Mammary epithelial cell (primary cell): ENCODE measurements at regions of chr1 and their contacts with region 1.

Region 1: GRCh38 chr1:172761581-172762025 is 102.7 kb downstream of the FASLG start:
- DNase-seq: peak; percentile 70
- H3K4me3 ChIP-seq: no peak overlapping the region
- H3K27ac ChIP-seq: no peak overlapping the region
- H3K4me1 ChIP-seq: peaks cover 17% of the 10 kb centered on the region
- H3K27me3 ChIP-seq: no peaks in the 10 kb centered on the region
- CTCF ChIP-seq: no peak

Region 2: DNA sequence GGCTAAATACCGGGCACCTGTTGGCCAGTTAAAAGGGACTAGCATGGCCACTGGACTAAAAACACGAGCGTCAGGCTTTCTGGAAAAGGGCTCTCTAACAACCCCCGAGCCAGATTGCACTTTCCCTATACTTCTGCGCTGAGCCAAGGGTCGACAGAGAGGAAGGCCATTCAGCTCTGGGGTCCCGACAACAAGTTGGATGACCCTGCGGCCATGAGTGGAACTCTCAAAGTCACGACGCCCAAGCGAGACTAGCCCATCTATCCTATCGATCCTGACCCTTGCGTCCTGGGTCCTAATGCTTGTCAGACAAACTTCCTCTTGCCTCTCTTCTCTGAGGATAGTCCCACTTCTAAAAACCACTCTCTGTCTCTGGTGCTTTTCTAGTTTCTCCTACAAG is 615.7 kb after region 1 on chr1:
- CTCF ChIA-PET with region 1: no interaction called
- dilution Hi-C with region 1: no loop called
- in situ Hi-C with region 1: no loop called
- intact Hi-C with region 1: no loop called
- DNase-seq: no peak
- H3K4me3 ChIP-seq: no peak overlapping the region
- H3K27ac ChIP-seq: no peak overlapping the region
- H3K4me1 ChIP-seq: no peaks in the 10 kb centered on the region
- H3K27me3 ChIP-seq: no peaks in the 10 kb centered on the region
- CTCF ChIP-seq: no peak

Region 3: DNA sequence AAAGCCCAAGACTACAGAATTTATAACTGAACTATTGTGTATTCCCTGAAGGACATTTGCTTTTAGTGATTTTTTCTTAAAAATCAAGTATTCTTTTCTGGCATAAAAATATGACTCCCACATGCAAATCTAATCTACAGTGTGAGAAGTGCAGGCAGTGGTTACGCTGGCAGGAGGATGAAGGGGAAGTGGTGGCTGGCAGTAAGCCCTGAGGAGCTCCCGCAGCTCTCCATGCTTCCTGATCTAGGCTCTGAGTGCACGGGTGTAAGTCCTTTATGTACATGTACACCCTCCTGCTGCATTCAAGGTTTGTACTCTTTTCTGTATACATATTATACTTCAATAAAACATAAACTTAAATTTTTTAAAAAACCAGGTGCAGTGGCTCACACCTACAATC is 648.0 kb after region 1 on chr1:
- CTCF ChIA-PET with region 1: no interaction called
- dilution Hi-C with region 1: loop called (anchors 25 kb)
- in situ Hi-C with region 1: no loop called
- intact Hi-C with region 1: loop called (anchors 5 kb)
- DNase-seq: peak; percentile 37
- H3K4me3 ChIP-seq: no peak overlapping the region
- H3K27ac ChIP-seq: no peak overlapping the region
- H3K4me1 ChIP-seq: peaks cover 20% of the 10 kb centered on the region
- H3K27me3 ChIP-seq: no peaks in the 10 kb centered on the region
- CTCF ChIP-seq: no peak

Region 4: DNA sequence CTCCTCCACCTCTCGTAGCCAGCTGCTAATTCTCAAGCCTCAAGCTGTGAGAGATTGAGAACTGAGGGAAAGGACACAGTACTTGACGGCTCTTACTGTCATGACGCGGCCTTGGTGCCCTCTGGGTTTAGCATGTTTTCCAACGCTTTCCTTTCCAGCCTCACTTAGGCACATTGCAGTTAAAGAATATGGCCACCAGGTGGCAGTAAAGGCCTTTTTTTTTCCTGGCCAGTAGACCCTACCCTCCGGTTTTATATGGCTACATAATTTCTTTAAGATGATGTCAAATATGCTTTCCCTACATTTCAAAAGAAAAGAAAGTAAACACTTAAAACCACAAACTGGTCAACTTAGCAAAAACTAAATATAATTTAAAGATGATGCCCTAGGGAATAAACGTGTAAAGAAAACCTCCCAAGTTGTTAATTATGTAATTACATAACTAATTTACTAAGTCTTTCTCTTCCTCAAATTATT is 658.8 kb after region 1 on chr1:
- CTCF ChIA-PET with region 1: no interaction called
- dilution Hi-C with region 1: loop called (anchors 25 kb)
- in situ Hi-C with region 1: no loop called
- intact Hi-C with region 1: no loop called
- DNase-seq: peak; percentile 68
- H3K4me3 ChIP-seq: no peak overlapping the region
- H3K27ac ChIP-seq: no peak overlapping the region
- H3K4me1 ChIP-seq: peaks cover 19% of the 10 kb centered on the region
- H3K27me3 ChIP-seq: no peaks in the 10 kb centered on the region
- CTCF ChIP-seq: peak; percentile 77 to 85